ENCODE measurements at regions of chr22 and their contacts with region 1.

Region 1: DNA sequence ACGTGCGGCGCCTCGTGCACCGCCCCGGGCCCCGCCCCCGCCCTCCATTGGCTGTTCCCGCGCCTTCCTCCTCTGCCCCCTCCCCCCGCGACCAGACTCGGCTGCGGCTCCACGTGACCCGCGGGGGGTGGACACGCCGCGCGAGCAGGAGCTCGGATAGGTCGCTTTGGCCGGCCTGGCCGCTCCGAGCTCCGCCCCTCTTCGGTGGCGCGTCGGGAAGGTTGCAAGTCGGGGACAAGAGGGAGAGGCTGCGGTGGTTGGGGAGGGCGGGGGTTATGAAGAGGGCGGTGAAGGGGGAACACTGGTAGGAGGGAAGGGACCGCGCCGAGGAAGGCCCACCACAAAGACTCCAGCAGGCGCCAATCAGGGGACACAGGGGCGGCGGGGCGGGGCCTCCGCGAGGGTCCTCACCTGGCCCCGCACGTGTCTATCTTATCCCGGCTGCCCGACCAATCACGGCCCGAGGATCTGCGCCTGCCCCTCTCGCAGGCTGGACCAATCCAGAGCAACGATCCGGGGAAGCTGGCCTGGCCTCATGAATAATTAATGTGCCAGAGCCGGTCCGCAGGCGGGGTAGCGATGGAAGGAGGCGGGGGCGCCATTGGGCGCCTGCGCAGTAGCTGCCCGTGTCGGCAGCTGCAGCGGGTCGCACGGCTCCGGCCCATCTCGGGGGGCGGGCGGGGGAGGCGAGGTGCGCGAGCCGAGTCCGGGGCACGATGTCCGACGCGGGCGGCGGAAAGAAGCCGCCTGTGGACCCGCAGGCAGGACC is at the start of gene TEF:
- DNase-seq: peak; percentile 97 to 99
- H3K4me3 ChIP-seq: peak within 1 kb of the TSS; percentile 79 to 87
- H3K27ac ChIP-seq: peak within 1 kb of the TSS; percentile 93 to 96
- H3K4me1 ChIP-seq: peaks cover 3 to 19% of the 10 kb centered on the region in 2 donors
- H3K27me3 ChIP-seq: no peaks in the 10 kb centered on the region
- CTCF ChIP-seq: no peak
- total RNA-seq, gene TEF: 20.2 TPM

Region 2: DNA sequence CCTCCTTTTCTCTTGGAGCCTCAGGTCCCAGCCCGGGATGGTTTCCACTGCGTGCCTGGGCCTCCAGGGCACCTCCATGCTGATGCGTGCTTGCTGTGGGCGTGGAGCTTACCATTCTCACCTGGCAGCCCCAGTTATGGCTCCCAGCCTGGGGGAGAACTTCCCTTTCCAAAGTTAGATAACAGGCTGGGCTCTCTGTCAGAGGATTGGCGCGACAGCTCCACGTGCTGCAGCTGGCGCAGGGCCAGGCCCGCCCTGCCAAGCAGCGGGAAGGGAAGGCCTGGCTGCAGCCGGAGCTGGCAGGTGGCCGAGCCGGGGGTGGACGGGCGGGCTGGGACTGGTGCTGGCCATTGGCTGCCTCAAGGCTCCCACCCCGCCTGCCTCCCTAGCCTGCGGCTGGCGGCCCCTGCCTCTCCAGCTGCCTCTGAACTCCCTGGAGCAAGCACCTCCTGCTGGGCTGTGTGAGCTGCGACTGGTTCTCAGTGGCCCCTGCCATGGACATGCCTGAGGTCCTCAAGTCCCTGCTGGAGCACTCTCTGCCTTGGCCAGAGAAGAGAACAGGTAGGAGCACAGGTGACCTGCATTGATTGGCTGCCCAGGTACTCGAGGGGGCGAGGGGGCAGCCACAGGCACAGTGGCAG is 14.4 kb before region 1 on chr22:
- intact Hi-C with region 1: loop called (anchors 1 kb)
- DNase-seq: peak; percentile 80 to 96
- H3K4me3 ChIP-seq: peak overlapping the region; percentile 57 to 63
- H3K27ac ChIP-seq: peak overlapping the region; percentile 53 to 56
- H3K4me1 ChIP-seq: peaks cover 10 to 26% of the 10 kb centered on the region in 2 donors
- H3K27me3 ChIP-seq: no peaks in the 10 kb centered on the region
- CTCF ChIP-seq: peak; percentile 14 to 36 (median 35)

Region 3: DNA sequence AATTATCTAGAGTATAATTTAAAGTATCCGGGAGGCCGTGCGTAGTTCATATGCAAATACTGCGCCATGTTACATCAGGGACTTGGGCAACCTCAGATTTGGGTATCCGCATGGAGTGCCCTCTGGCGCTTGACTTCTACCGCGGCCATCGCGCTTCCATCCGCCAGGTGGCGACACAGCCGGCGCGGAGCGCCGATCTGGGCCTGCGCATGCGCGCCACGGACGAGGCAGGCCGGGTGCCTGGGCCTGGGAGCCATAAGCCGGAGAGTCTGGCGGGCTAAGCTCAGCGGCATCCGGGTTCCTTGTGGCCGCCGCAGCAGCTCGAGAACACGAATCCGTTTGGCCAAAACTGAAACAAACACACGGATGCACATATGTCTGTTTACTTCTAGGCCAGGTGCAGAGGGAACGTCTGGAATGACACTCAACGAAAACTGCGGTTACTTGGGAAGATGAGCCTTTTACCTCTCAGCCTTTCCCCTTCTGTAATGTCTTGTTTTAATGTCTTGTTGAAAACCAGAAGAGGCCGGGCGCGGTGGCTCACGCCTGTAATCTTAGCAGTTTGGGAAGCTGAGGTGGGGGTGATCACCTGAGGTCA is 285.2 kb after region 1 on chr22:
- intact Hi-C with region 1: no loop called
- DNase-seq: peak; percentile 59 to 94
- H3K4me3 ChIP-seq: peak overlapping the region in 1 of 2 donors; percentile 51
- H3K27ac ChIP-seq: peak overlapping the region; percentile 72 to 84
- H3K4me1 ChIP-seq: peaks cover 0 to 4% of the 10 kb centered on the region in 2 donors
- H3K27me3 ChIP-seq: no peaks in the 10 kb centered on the region
- CTCF ChIP-seq: peak; percentile 97 to 98 (median 97)